GM12878 (cell line): ENCODE measurements at regions of chr15 and their contacts with region 1.

Region 1: GRCh38 chr15:41116116-41116871 is at the start of gene INO80:
- DNase-seq: peak; percentile 94
- ATAC-seq: peak; percentile 83
- H3K4me3 ChIP-seq: peak within 1 kb of the TSS; percentile 79
- H3K27ac ChIP-seq: peak within 1 kb of the TSS; percentile 85
- H3K4me1 ChIP-seq: no peaks in the 10 kb centered on the region
- H3K27me3 ChIP-seq: no peaks in the 10 kb centered on the region
- CTCF ChIP-seq: no peak
- EP300 ChIP-seq: no peak
- POLR2A ChIP-seq: peak; percentile 82
- RAD21 ChIP-seq: no peak
- polyA plus RNA-seq, gene INO80: 4.5 to 5.0 TPM

Region 2: DNA sequence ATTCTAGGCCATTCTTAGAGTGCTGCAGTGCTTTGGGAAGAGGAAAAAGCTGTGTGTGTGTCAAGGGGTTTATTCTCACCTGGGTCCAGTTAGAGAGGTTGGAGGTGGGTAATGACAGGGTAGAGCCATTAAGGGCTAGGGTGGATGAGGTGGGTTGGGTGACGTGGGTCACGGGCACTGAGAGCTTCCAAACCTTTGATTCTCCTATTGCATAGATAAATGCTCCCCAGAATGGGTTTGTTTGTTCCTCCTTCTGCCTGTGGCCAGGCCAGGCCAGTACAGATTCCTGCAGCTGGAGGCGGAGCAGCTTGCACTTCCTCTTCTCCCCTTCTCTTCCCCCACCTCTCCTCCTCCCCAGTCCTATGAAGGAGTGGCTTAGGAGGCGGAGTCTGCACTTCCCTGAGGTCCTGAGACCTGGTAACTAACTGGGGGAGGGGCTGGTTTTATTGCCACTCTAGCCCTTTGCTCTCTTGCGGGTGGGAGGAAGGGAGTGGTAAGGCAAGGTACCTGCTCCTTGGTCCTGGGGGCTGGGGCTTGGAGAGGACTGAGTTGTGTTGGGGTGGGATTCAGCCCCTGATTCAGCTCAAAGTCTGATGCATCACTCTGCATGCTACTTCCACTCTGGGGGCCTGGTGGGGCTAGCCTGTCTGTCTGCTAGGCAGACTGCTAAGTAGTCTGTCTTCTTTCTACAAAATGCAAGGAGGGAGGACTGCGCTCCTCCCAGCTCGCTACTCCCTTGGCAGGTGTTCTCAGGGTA is 268.9 kb before region 1 on chr15:
- CTCF ChIA-PET with region 1: no interaction called
- POLR2A ChIA-PET with region 1: no interaction called
- RAD21 ChIA-PET with region 1: no interaction called
- SMC1A ChIA-PET with region 1: no interaction called
- in situ Hi-C with region 1: no loop called
- intact Hi-C with region 1: loop called (anchors 10 kb)
- DNase-seq: peak; percentile 57
- ATAC-seq: peak; percentile 82
- H3K4me3 ChIP-seq: peak overlapping the region; percentile 45; the same call in 1 of the 2 replicates
- H3K27ac ChIP-seq: peak overlapping the region; percentile 76
- H3K4me1 ChIP-seq: peaks cover 26% of the 10 kb centered on the region
- H3K27me3 ChIP-seq: peaks cover 1 to 3% of the 10 kb centered on the region in 2 experiments; a peak in 1 of 4 replicates
- CTCF ChIP-seq: no peak
- EP300 ChIP-seq: no peak
- POLR2A ChIP-seq: no peak
- RAD21 ChIP-seq: no peak

Region 3: DNA sequence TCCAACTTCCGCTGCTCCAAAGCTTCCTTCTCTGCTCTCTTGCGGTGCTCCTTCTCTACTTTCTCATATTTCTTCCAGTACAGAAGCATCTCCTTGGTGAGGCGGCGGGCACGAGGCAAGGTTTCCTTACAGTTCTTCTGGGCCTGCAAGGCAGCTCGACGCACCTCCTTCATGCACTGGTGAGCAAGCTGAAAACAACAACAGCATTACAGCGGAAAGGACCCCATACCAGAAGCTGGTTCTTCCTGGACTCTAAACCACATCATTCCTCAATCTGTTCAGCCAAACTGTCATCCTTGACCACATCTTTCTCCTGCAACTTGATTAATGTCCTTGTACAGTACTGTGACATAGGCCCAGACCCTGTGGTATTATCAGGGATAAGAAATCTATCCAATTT is 36.6 kb before region 1 on chr15:
- CTCF ChIA-PET with region 1: no interaction called
- POLR2A ChIA-PET with region 1: interaction called, 11 read pairs
- RAD21 ChIA-PET with region 1: no interaction called
- SMC1A ChIA-PET with region 1: no interaction called
- in situ Hi-C with region 1: no loop called
- intact Hi-C with region 1: no loop called
- DNase-seq: no peak
- ATAC-seq: no peak
- H3K4me3 ChIP-seq: no peak overlapping the region
- H3K27ac ChIP-seq: no peak overlapping the region
- H3K4me1 ChIP-seq: no peaks in the 10 kb centered on the region
- H3K27me3 ChIP-seq: no peaks in the 10 kb centered on the region
- CTCF ChIP-seq: no peak
- EP300 ChIP-seq: no peak
- POLR2A ChIP-seq: no peak
- RAD21 ChIP-seq: no peak